ENCODE measurements at regions of chr15 and their contacts with region 1.

Region 1: GRCh38 chr15:35444557-35445204 is 101.3 kb downstream of the DPH6 start:
- DNase-seq: no peak
- ATAC-seq: no peak
- H3K4me3 Mint-ChIP-seq: no peak overlapping the region
- H3K27ac Mint-ChIP-seq: no peak overlapping the region
- H3K4me1 Mint-ChIP-seq: no peaks in the 10 kb centered on the region
- H3K27me3 Mint-ChIP-seq: no peaks in the 10 kb centered on the region

Region 2: DNA sequence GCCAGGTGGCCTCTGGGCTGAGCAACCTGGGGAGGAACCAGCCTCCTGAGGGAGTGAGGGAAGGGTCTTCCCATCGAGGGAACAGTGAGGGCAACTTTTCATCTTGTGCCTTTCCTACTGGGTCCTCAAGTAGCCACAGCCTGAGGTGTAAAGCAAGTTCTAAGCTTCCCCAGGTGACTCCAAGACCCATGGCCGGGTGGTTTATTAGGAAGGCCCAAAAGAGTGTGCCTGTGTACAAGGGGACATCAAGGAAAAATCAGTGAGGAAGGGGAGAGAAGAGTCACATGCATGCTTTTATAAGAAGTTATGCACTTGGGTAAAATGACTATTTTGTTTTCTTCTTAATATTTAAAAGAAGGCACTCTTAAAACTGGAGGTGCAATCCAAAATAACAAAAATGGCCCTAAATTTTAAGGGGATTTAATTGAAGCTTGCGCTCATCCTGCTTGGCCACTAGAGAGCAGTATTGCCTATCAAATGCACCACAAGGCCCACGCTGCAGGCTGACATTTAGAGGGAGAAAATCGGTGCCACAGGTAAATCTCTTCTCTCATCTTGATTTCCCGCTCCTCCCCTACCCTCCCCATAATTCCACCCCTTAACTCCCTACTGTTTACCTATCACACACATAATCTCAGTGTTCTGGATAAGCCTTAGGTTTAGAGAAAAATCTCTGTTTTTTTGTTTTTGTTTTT is 366.3 kb before region 1 on chr15:
- CTCF ChIA-PET with region 1: interaction called, 25 read pairs
- DNase-seq: peak; percentile 53
- ATAC-seq: no peak
- H3K4me3 Mint-ChIP-seq: no peak overlapping the region
- H3K27ac Mint-ChIP-seq: no peak overlapping the region
- H3K4me1 Mint-ChIP-seq: no peaks in the 10 kb centered on the region
- H3K27me3 Mint-ChIP-seq: peaks cover 3% of the 10 kb centered on the region

Region 3: GRCh38 chr15:35289024-35289617 is 155.6 kb before region 1 on chr15:
- CTCF ChIA-PET with region 1: interaction called, 28 read pairs
- DNase-seq: no peak
- ATAC-seq: no peak
- H3K4me3 Mint-ChIP-seq: no peak overlapping the region
- H3K27ac Mint-ChIP-seq: no peak overlapping the region
- H3K4me1 Mint-ChIP-seq: no peaks in the 10 kb centered on the region
- H3K27me3 Mint-ChIP-seq: no peaks in the 10 kb centered on the region

Region 4: DNA sequence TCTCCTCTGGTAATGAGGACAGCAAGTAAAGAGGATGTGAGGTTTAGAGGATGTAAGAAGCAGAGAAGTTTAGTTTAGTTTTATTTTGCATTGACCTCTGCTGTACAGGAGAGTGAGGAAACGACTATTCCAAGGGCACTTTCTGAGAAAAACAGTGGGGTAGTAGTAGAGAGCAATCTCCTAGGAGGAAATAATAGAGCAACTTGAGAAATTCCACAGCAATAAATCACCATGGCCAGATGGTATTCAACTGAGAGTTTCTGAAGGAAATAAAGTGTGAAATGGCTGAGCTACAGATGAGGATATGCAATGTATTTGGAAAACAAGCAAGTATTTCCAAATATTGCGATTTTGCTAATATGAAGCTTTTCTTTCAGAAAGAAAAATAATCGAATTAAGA is 17.6 kb before region 1 on chr15:
- CTCF ChIA-PET with region 1: interaction called, 10 read pairs
- DNase-seq: no peak
- ATAC-seq: no peak
- H3K4me3 Mint-ChIP-seq: no peak overlapping the region
- H3K27ac Mint-ChIP-seq: no peak overlapping the region
- H3K4me1 Mint-ChIP-seq: no peaks in the 10 kb centered on the region
- H3K27me3 Mint-ChIP-seq: no peaks in the 10 kb centered on the region